ENCODE measurements at regions of chr4 and their contacts with region 1.

Region 1: DNA sequence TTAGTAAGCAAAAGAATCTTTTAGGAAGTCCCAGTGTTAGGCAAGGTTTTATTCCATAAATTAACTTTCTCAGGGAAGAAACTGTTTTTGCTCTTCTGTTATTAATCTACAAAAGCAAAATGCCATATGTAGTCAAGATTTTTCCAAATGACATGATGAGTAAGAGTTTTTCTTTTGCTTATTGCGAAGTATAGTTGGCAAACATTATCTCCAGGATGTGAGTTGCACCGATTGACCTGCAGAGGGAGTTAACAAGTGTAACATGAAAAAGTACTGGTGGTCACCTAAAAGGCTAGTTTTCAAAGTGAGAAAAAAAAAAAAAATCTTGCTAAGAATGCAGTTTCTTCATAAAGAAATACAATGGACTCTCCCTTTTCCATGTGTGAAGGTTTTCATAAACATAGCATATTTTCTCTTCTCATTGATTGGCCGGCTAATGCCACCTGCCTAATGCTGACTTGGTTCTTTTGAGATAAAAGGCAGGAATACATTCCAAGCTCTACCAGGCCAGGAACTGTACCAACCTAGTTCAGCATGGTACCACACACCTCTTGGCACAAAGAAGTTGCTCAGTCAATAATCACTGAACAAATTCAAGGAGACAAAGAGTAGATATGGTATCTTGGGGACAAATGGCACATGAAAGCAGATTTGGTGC is 100.2 kb downstream of the LNX1 start:
- DNase-seq: peak; percentile 87
- ATAC-seq: peak; percentile 64
- H3K4me3 ChIP-seq: no peak overlapping the region
- H3K27ac ChIP-seq: no peak overlapping the region
- H3K4me1 ChIP-seq: peaks cover 9% of the 10 kb centered on the region
- H3K27me3 ChIP-seq: no peaks in the 10 kb centered on the region
- CTCF ChIP-seq: peak; percentile 91

Region 2: GRCh38 chr4:52813546-52813945 is 677.5 kb before region 1 on chr4:
- CTCF ChIA-PET with region 1: no interaction called
- POLR2A ChIA-PET with region 1: no interaction called
- intact Hi-C with region 1: no loop called
- DNase-seq: no peak
- ATAC-seq: no peak
- H3K4me3 ChIP-seq: no peak overlapping the region
- H3K27ac ChIP-seq: no peak overlapping the region
- H3K4me1 ChIP-seq: no peaks in the 10 kb centered on the region
- H3K27me3 ChIP-seq: no peaks in the 10 kb centered on the region
- CTCF ChIP-seq: no peak

Region 3: GRCh38 chr4:53459548-53459947 is 31.5 kb before region 1 on chr4:
- CTCF ChIA-PET with region 1: no interaction called
- POLR2A ChIA-PET with region 1: no interaction called
- intact Hi-C with region 1: no loop called
- DNase-seq: peak; percentile 64
- ATAC-seq: peak; percentile 68
- H3K4me3 ChIP-seq: no peak overlapping the region
- H3K27ac ChIP-seq: peak overlapping the region; percentile 12
- H3K4me1 ChIP-seq: peaks cover 57% of the 10 kb centered on the region
- H3K27me3 ChIP-seq: no peaks in the 10 kb centered on the region
- CTCF ChIP-seq: no peak

Region 4: DNA sequence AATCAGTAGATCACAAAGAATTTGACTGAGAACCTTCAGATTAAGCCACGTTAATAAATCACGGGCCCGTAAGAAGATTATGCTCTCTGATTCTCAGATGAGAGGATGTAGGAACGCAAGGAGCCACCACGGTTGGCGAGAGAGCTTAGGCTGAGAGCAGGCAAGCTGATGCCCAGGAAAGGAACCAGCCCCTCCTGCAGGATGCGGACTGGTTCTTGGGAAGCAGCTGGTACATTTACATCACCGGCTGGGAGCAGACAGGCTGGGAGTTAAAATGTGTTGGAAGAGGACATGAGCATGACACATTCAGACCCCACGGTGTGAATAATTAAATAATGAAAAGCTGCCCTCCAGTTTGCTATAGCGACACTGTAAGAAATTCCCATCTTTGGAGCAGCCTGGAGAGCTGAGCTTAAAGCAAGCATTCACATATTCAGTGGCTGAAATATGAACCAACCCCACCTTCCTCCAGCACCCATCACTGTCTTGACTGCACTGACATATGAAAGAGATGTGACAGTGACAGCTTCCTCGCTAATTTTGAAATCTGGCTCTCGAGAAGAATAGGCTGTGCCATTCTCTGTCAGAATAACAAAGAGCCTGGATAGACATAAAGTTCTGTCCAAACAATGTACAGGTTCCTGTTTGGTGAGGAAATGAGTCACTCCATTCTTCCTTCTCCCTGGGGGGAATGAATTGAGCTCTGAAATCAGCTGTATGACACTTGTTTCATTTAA is 67.1 kb after region 1 on chr4:
- CTCF ChIA-PET with region 1: interaction called, 12 read pairs
- POLR2A ChIA-PET with region 1: no interaction called
- intact Hi-C with region 1: loop called (anchors 5 kb)
- DNase-seq: peak; percentile 90
- ATAC-seq: peak; percentile 96
- H3K4me3 ChIP-seq: peak overlapping the region; percentile 11; the same call in 1 of the 2 replicates
- H3K27ac ChIP-seq: peak overlapping the region; percentile 27; the same call in 1 of the 2 replicates
- H3K4me1 ChIP-seq: peaks cover 22% of the 10 kb centered on the region
- H3K27me3 ChIP-seq: no peaks in the 10 kb centered on the region
- CTCF ChIP-seq: no peak

Measured in PC-3 (cell line).